WTC11 (cell line): ENCODE measurements at regions of chr9 and their contacts with region 1.

Region 1: DNA sequence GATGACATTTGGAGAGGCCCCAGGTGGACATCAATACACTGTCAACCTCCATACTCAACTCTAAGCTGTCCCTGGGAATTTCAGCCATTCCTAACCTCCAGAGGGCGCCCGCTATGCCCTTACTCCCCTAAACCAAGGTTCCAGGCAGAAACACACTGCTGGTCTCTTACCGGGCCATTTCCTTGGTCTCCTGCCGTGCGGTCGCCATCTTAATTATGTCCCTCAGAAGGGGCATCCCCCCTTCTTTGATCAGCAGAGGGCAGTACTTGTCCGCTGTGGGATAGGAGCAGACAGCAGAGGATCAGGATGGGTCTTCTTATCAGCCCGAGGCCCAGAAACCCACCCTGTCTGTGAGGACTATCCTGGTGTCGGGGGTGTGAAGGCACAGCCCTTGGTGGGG is 9.3 kb upstream of the ZDHHC12 start:
- DNase-seq: peak; percentile 95
- ATAC-seq: peak; percentile 97
- H3K4me3 Mint-ChIP-seq: no peak overlapping the region
- H3K27ac Mint-ChIP-seq: peak overlapping the region; percentile 90
- H3K4me1 Mint-ChIP-seq: peaks cover 6% of the 10 kb centered on the region
- H3K27me3 Mint-ChIP-seq: no peaks in the 10 kb centered on the region
- CTCF ChIP-seq: peak; percentile 55

Region 2: DNA sequence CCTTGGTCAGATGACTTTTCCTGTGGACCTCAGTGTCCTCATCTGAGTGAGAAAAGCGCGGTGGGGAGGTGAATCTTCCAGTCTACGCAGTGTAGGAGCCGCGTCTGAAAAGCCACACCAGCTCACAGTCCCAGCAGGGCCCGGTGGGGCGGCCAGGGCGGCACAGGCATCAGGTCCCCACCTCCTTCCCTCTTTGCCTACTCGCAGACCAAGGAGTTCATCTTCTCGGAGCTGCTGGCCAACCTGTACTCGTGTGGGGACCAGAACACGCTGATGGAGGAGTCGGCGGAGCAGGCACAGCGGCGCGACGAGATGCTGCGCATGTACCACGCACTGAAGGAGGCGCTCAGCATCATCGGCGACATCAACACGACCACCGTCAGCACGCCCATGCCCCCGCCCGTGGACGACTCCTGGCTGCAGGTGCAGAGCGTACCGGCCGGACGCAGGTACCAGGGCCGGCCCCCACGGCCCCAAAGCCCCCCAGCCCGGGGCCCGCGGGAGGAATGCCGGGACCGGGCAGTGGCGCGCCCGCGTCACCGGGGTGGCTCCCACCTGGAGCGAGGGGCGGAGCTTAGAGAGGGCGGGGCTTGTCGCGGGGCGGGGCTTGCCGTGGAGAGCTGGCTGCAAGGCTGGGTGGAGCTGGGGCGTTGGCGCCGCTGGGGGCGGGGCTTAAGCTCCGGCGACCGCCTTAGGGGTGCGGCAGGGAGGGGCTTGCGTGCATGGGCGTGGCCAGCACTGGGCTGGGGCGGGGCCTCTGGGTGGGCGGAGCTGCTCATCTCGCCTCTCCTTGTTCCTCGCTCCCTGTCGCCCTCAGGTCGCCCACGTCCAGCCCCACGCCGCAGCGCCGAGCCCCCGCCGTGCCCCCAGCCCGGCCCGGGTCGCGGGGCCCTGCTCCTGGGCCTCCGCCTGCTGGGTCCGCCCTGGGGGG is 483.1 kb before region 1 on chr9:
- CTCF ChIA-PET with region 1: no interaction called
- POLR2A ChIA-PET with region 1: no interaction called
- DNase-seq: peak; percentile 98
- ATAC-seq: peak; percentile 91
- H3K4me3 Mint-ChIP-seq: peak overlapping the region; percentile 85
- H3K27ac Mint-ChIP-seq: peak overlapping the region; percentile 83
- H3K4me1 Mint-ChIP-seq: peaks cover 41% of the 10 kb centered on the region
- H3K27me3 Mint-ChIP-seq: peaks cover 9% of the 10 kb centered on the region
- CTCF ChIP-seq: no peak

Region 3: DNA sequence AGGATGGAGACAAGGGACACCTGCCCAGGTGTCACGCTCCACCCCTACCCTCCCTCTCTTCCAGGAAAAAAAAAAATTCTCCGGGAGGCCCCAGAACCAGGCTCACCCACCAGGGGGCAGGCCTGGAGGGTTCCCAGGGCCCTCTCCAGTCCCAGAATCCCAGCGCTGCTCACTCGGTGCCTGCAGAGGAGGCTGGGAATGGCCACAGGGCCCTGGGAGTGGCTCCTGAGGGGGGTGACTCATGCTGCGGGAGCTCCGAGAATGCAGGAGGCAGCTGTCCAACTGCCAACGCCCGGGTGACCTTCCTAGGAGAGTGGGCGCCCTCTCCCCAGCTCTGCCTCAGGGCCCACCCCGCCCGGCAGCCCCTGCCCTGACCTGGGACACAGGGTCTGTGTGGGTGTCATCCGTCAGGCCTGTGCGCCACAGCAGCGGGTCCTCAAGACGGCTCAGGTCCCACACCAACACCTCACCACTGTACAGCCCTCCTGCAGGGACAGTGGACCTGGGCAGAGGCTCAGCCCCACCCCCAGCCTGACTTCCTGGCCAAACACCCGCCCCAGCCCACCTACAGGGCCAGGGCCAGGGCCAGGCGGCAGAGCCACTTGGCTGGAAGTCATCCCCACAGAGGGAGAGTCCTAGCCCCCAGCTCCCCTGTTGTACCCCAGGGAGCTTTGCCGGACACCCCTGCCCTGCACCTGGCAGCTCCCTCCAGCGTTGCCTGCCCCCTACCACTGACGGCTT is 97.8 kb before region 1 on chr9:
- CTCF ChIA-PET with region 1: interaction called, 19 read pairs
- POLR2A ChIA-PET with region 1: no interaction called
- DNase-seq: peak; percentile 84
- ATAC-seq: peak; percentile 79
- H3K4me3 Mint-ChIP-seq: no peak overlapping the region
- H3K27ac Mint-ChIP-seq: peak overlapping the region; percentile 15; the same call in 1 of the 2 replicates
- H3K4me1 Mint-ChIP-seq: peaks cover 3% of the 10 kb centered on the region; the same call in 1 of the 2 replicates
- H3K27me3 Mint-ChIP-seq: no peaks in the 10 kb centered on the region
- CTCF ChIP-seq: peak; percentile 53; the same call in 1 of the 2 replicates

Region 4: GRCh38 chr9:128702445-128702948 is 30.8 kb before region 1 on chr9 and contains the start of gene PKN3:
- CTCF ChIA-PET with region 1: interaction called, 11 read pairs
- POLR2A ChIA-PET with region 1: no interaction called
- DNase-seq: peak; percentile 97
- ATAC-seq: peak; percentile 81
- H3K4me3 Mint-ChIP-seq: peak within 1 kb of the TSS; percentile 83
- H3K27ac Mint-ChIP-seq: peak within 1 kb of the TSS; percentile 89
- H3K4me1 Mint-ChIP-seq: peaks cover 4% of the 10 kb centered on the region; the same call in 1 of the 2 replicates
- H3K27me3 Mint-ChIP-seq: no peaks in the 10 kb centered on the region
- CTCF ChIP-seq: peak; percentile 96
- total RNA-seq, gene PKN3: 24.1 to 28.9 TPM (median 27.5 TPM) in 3 replicates

Region 5: DNA sequence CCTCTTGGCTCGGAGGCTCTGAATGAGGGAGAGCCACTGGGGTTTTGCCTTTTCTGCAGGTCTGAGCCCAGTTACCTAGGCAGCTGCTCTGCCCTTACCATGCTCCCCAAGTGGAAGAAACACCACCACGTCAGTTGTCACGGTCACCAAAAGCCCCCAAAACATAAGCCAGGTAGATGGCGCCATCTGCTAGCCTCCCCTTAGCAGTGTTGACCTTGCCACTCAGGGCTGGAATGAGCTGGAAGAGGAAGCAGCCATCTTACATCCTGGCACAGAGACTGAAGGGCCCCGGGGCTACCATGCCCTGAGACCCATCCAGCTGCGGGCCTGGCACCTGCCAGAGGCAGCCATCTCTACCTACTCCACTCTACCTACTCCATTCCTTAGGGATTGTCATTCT is 31.1 kb after region 1 on chr9:
- CTCF ChIA-PET with region 1: interaction called, 15 read pairs
- POLR2A ChIA-PET with region 1: interaction called, 5 read pairs
- DNase-seq: peak; percentile 50
- ATAC-seq: peak; percentile 87
- H3K4me3 Mint-ChIP-seq: no peak overlapping the region
- H3K27ac Mint-ChIP-seq: peak overlapping the region; percentile 90
- H3K4me1 Mint-ChIP-seq: peaks cover 10% of the 10 kb centered on the region
- H3K27me3 Mint-ChIP-seq: no peaks in the 10 kb centered on the region
- CTCF ChIP-seq: no peak

Region 6: GRCh38 chr9:128771745-128772519 is 38.7 kb after region 1 on chr9 and contains the start of gene ZER1:
- CTCF ChIA-PET with region 1: interaction called, 20 read pairs
- POLR2A ChIA-PET with region 1: interaction called, 5 read pairs
- DNase-seq: peak; percentile 92
- ATAC-seq: peak; percentile 84
- H3K4me3 Mint-ChIP-seq: peak within 1 kb of the TSS; percentile 95
- H3K27ac Mint-ChIP-seq: peak within 1 kb of the TSS; percentile 99
- H3K4me1 Mint-ChIP-seq: peaks cover 9% of the 10 kb centered on the region
- H3K27me3 Mint-ChIP-seq: no peaks in the 10 kb centered on the region; the same call in 1 of the 2 replicates
- CTCF ChIP-seq: no peak
- total RNA-seq, gene ZER1: 20.6 to 24.5 TPM (median 23.8 TPM) in 3 replicates

Region 7: GRCh38 chr9:128802482-128802881 is 69.2 kb after region 1 on chr9:
- CTCF ChIA-PET with region 1: no interaction called
- POLR2A ChIA-PET with region 1: no interaction called
- DNase-seq: no peak
- ATAC-seq: no peak
- H3K4me3 Mint-ChIP-seq: no peak overlapping the region
- H3K27ac Mint-ChIP-seq: no peak overlapping the region
- H3K4me1 Mint-ChIP-seq: no peaks in the 10 kb centered on the region
- H3K27me3 Mint-ChIP-seq: no peaks in the 10 kb centered on the region
- CTCF ChIP-seq: no peak

Region 8: GRCh38 chr9:128818099-128818838 is 85.0 kb after region 1 on chr9 and contains the start of gene ENDOG:
- CTCF ChIA-PET with region 1: interaction called, 40 read pairs
- POLR2A ChIA-PET with region 1: no interaction called
- DNase-seq: peak; percentile 99
- ATAC-seq: peak; percentile 86
- H3K4me3 Mint-ChIP-seq: peak within 1 kb of the TSS; percentile 71
- H3K27ac Mint-ChIP-seq: peak within 1 kb of the TSS; percentile 80; the same call in 1 of the 2 replicates
- H3K4me1 Mint-ChIP-seq: peaks cover 3% of the 10 kb centered on the region
- H3K27me3 Mint-ChIP-seq: no peaks in the 10 kb centered on the region
- CTCF ChIP-seq: peak; percentile 53; the same call in 1 of the 2 replicates
- total RNA-seq, gene ENDOG: 25.8 to 28.7 TPM (median 25.8 TPM) in 3 replicates

Region 9: DNA sequence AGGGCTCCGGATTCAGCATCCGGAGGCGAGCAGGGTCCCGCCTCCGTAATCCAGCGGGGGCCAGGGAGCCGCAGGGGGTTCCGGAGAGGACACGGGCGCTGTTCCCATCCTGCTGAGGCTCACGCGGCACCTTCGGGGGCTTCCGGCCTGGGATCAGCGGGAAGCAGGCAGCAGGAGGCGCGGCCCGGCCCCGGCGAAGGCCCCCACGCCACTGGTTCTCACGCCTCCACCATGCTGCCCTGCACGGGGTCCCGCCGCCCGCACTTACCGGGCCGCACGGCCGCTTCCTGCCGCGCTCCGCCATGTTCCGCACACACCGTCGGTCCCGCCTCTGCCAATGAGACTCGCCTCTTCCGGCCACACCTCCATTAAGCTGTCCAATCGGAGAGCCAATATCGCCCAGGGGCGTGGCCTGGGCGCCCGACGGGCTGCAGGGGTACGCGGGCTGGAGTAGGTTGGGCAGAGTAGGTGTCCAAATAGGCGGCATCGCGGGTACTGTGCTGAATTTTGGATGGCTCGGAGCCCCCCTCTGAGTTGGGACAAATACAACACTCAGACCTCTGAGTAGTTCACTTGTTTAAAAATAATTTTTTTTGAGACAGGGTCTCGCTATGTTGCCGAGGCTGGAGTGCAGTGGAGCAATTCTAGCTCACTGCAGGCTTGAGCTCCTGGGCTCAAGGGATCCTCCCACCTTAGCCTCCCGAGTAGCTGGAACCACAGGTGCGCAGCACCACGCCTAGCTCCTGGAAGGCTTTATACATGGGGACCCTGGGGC is 96.4 kb after region 1 on chr9 and contains the start of gene SPOUT1:
- CTCF ChIA-PET with region 1: interaction called, 12 read pairs
- POLR2A ChIA-PET with region 1: no interaction called
- DNase-seq: peak; percentile 96
- ATAC-seq: peak; percentile 97
- H3K4me3 Mint-ChIP-seq: peak within 1 kb of the TSS; percentile 93
- H3K27ac Mint-ChIP-seq: peak within 1 kb of the TSS; percentile 89
- H3K4me1 Mint-ChIP-seq: peaks cover 8% of the 10 kb centered on the region
- H3K27me3 Mint-ChIP-seq: no peaks in the 10 kb centered on the region
- CTCF ChIP-seq: no peak
- total RNA-seq, gene SPOUT1: 76.8 to 79.3 TPM (median 77.5 TPM) in 3 replicates